Mammary epithelial cell (primary cell): ENCODE measurements at regions of chr16 and their contacts with region 1.

Region 1: DNA sequence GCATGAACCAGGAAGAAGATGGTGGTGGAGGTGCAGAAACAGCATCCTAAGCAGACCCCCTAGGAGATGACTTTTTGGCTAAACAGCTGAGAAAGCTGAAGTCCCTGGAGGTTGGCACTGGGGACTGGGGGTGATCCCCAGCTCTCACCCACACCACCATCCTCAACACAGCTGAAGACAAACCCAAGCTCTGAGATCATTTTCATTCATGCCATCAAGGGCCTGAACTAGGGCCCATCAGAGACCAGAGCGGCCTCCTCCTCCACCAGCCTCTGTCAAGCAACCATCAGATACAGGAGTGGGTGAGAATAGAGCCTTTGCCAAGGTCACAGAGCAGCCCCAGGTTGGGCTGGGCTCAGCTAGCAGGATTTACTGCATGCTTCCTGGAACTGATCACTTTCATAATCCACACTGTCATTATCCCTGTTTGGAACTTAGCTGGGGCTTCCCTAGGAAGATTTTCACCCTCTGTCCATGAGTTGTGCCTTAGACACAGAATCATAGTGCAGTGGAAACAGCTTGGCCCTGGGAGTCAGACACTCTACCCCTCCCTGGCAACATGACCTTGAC is 5.0 kb downstream of the MT4 start:
- DNase-seq: no peak
- H3K4me3 ChIP-seq: no peak overlapping the region
- H3K27ac ChIP-seq: no peak overlapping the region
- H3K4me1 ChIP-seq: no peaks in the 10 kb centered on the region
- H3K27me3 ChIP-seq: no peaks in the 10 kb centered on the region
- CTCF ChIP-seq: no peak

Region 2: DNA sequence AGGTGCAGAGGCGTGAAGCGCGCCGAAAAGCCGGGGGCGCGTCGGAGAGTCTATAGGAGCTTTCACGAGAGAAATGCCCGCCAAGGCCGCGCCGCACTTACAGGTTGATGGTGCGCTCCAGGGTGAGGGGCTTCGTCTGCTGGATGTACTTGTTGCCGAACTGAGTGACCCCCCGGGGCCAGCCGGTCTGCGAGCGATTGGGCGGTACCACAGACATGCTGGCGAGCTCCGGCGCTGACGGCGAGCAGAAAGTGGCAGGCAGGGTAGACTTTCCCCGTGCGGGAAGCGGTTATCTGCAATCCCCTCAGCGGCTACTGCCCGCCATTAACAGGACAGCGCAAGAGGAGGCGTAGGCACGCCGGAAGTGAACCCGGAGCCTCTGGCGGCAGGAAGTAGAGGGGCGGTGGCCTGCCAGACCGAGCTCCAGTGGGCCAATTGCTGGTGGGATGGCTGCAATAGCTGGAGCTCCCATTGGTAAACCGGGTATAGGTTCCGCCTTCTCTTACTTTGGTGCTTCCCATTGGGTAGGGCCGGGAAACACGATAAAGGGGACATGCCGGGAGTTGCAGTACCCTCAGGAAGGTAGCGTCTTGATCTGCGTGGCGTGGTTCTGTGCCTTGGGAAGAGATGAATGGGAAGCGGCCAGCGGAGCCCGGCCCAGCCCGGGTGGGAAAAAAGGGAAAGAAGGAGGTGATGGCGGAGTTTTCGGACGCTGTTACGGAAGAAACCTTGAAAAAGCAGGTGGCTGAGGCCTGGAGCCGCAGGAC is 118.7 kb before region 1 on chr16 and contains the starts of genes NUDT21 and OGFOD1:
- CTCF ChIA-PET with region 1: no interaction called
- dilution Hi-C with region 1: no loop called
- in situ Hi-C with region 1: no loop called
- intact Hi-C with region 1: no loop called
- DNase-seq: peak; percentile 98
- H3K4me3 ChIP-seq: peak within 1 kb of the TSS; percentile 84 to 98 (median 88)
- H3K27ac ChIP-seq: peak within 1 kb of the TSS; percentile 67
- H3K4me1 ChIP-seq: peaks cover 13% of the 10 kb centered on the region
- H3K27me3 ChIP-seq: no peaks in the 10 kb centered on the region
- CTCF ChIP-seq: no peak
- total RNA-seq, gene NUDT21: 57.7 to 109 TPM
- total RNA-seq, gene OGFOD1: 84.3 to 110 TPM

Region 3: DNA sequence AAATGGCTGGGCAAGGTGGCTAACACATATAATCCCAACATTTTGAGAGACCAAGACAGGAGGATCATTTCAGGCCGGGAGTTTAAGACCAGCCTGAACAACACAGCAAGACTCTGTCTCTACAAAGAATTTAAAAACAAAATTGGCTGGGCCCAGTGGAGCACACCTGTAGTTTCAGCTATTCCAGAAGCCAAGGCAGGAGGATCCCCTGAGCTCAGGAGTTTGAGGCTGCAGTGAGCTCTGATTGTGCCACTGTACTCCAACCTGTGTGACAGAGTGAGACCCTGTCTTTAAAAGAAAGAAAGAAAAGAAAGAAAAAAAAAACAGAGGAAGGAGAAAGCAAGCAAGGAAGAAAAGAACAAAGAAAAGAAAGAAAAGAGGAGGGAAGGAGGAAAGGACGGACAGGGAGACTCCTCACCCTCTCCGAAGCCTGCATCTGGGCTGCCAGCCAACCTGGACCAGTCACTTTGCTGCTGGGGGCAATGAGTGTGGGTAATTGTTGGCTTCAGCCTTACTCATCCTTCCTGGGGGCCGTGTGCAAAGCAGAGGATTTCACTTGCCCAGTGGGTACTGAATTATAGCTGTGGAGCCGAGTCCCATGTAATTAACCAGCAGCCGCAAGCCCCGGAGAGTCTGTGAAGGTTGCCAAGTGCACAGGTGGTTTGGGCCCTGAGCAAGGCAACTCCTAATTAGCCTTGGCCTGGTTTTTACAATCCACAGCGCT is 11.7 kb before region 1 on chr16:
- CTCF ChIA-PET with region 1: no interaction called
- dilution Hi-C with region 1: no loop called
- in situ Hi-C with region 1: no loop called
- intact Hi-C with region 1: no loop called
- DNase-seq: peak; percentile 92
- H3K4me3 ChIP-seq: no peak overlapping the region
- H3K27ac ChIP-seq: no peak overlapping the region
- H3K4me1 ChIP-seq: peaks cover 21% of the 10 kb centered on the region
- H3K27me3 ChIP-seq: no peaks in the 10 kb centered on the region
- CTCF ChIP-seq: no peak

Region 4: DNA sequence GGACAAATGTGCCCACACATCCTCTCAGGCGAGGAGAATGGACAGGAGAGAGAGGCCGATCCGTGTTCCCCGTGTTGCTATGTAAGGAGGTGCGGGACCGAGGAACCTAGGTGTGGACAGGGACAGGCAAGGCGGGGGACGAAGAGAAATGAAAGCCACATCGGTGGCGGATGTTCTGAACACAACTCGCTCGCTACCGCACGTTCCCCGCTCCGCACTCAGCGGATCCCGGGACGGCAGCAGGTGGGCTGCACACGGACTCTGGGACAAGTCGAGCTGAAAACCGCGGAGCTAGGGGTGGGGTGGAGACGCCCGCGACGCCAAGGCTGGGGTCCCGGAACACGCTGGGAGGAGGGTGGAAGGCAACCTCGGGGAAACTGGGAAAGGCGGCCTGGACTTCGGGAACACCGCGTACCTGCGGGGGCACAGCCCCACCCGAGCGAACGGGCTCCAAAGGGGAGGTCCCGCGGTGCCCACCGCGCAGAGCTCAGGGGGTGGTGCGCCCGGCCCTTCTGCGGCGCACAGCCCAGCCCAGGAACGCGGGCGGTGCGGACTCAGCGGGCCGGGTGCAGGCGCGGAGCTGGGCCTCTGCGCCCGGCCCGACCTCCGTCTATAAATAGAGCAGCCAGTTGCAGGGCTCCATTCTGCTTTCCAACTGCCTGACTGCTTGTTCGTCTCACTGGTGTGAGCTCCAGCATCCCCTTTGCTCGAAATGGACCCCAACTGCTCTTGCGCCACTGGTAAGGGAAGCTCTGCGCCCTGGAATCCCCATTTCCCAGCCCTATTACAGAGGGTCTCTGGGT is 55.5 kb after region 1 on chr16 and contains the start of gene MT1E:
- CTCF ChIA-PET with region 1: no interaction called
- dilution Hi-C with region 1: loop called (anchors 10 kb)
- in situ Hi-C with region 1: no loop called
- intact Hi-C with region 1: no loop called
- DNase-seq: peak; percentile 74
- H3K4me3 ChIP-seq: peak within 1 kb of the TSS; percentile 56 to 70 (median 63)
- H3K27ac ChIP-seq: peak within 1 kb of the TSS; percentile 44
- H3K4me1 ChIP-seq: peaks cover 6% of the 10 kb centered on the region
- H3K27me3 ChIP-seq: no peaks in the 10 kb centered on the region
- CTCF ChIP-seq: no peak
- total RNA-seq, gene MT1E: 259 to 468 TPM